Calu3 (cell line): ENCODE measurements at regions of chr11 and their contacts with region 1.

Region 1: GRCh38 chr11:111422494-111423249 is 43.6 kb upstream of the POU2AF1 start:
- DNase-seq: peak; percentile 72
- H3K4me3 Mint-ChIP-seq: no peak overlapping the region
- H3K27ac Mint-ChIP-seq: no peak overlapping the region
- H3K4me1 Mint-ChIP-seq: peaks cover 23% of the 10 kb centered on the region
- H3K27me3 Mint-ChIP-seq: peaks cover 13% of the 10 kb centered on the region
- CTCF ChIP-seq: peak; percentile 75

Region 2: DNA sequence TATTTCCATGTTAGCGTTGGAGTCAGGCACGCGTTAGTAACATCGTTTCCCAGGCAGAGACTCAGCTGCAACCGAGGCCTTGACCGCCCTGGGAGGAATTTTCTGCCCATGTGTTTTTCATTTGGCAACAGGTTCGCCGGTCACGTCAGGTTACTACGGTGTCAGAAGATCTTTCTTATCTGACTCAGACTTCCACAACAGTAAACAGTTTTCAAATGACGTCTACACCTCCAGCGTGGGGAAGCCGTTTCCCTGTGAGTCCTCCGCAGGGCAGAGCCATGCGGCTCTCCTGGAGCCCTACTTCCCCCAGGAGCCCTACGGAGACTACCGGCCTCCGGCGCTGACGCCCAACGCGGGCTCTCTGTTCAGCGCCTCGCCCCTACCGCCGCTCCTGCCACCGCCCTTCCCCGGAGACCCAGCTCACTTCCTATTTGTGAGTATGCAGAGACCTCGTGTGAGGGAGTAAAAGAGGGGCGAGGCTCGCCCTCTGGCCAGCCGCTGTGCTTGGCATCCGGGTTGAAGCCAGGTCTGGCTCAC is 138.7 kb before region 1 on chr11:
- CTCF ChIA-PET with region 1: interaction called, 8 read pairs
- intact Hi-C with region 1: loop called (anchors 1 kb)
- DNase-seq: peak; percentile 43
- H3K4me3 Mint-ChIP-seq: peak overlapping the region; percentile 61
- H3K27ac Mint-ChIP-seq: no peak overlapping the region
- H3K4me1 Mint-ChIP-seq: peaks cover 13% of the 10 kb centered on the region
- H3K27me3 Mint-ChIP-seq: peaks cover 30% of the 10 kb centered on the region
- CTCF ChIP-seq: no peak

Region 3: DNA sequence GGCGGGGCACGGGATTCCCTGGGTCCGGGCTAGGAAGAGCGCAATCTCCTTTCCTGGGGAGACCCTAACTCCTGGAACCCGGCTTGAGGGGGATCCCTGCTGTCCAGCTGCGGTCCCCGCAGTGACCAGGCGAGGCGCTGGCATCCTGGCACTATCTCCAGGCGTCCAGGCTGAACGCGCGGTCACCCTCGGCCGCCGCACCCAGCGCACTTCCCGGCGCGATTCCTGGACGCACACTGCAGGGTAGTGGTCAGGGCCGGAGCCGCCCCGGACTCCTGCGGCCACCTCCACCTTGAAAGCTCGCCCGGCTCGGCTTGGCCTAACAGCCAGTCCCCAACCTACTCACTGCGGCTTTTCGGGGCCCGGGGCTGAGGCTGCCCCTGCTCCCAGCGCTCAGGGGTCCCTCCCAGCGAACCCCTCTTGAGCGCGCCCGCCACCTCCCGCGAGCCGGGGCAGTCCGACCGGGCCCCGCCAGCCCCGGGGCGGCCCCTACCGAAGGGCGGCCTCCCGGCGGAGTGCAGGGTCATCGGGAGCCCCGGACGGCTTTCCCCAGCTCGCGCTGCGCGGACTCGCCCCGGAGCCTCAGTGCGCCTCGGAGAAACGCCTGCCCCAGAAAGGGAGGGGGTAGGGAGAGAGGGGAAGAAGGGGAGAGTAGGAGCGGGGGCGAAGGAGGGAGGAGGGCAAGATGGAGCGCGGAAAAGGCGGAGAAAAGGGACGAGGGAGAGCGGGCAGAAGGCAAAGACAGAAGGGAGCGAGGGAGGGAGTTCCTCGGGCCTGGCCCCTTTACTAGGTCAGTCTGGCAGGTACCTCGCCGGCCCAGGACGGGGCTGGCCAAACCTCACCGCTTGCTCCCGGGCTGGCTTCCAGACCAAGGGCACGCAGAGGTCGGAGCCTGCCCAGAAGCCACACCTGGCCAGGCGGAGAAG is 123.3 kb before region 1 on chr11:
- CTCF ChIA-PET with region 1: interaction called, 7 read pairs
- intact Hi-C with region 1: loop called (anchors 5 kb)
- DNase-seq: peak; percentile 76
- H3K4me3 Mint-ChIP-seq: peak overlapping the region; percentile 66
- H3K27ac Mint-ChIP-seq: no peak overlapping the region
- H3K4me1 Mint-ChIP-seq: peaks cover 9% of the 10 kb centered on the region
- H3K27me3 Mint-ChIP-seq: no peaks in the 10 kb centered on the region
- CTCF ChIP-seq: peak; percentile 54

Region 4: DNA sequence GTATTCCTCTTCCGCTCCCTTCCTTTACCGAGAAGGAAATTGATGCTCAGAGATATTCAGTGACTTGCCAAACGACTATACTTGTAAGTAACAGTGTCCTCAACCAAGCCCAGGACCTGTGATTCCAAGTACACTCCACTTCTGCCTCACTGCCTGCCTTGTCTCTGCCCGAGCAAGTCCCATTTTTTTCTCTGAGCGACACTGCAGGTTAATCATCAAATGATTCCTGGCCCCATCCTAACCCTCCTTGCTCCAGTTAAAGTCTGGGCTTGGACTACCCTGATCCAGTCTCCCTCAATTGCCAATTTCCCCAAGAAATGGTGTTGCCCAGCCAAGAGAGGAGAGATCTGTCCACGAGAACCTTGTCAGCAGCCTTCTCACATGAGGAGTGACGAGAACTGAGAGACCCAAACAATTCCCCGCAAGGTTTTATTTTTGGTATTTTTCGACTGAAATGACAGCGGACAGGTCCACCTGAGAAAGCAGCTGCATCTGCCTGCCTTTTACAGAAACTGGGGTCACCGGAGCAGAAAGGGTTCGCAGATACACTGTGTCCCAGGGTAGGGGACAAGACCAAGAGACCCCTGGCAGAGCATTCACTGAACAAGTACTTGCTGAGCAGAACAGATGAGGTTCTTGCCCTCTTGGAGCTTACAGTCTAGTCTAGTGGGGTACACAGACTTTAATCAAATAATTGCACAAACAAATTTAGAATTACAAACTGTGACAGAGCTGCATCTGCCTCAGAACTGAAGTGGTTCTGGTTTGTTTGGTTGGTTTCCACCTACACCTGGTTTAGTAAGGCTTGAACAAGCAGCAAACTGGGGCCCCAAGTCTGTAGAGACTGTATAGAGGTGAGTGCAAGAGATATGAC is 55.0 kb before region 1 on chr11:
- CTCF ChIA-PET with region 1: no interaction called
- intact Hi-C with region 1: loop called (anchors 10 kb)
- DNase-seq: no peak
- H3K4me3 Mint-ChIP-seq: no peak overlapping the region
- H3K27ac Mint-ChIP-seq: no peak overlapping the region
- H3K4me1 Mint-ChIP-seq: peaks cover 1% of the 10 kb centered on the region
- H3K27me3 Mint-ChIP-seq: no peaks in the 10 kb centered on the region
- CTCF ChIP-seq: no peak

Region 5: DNA sequence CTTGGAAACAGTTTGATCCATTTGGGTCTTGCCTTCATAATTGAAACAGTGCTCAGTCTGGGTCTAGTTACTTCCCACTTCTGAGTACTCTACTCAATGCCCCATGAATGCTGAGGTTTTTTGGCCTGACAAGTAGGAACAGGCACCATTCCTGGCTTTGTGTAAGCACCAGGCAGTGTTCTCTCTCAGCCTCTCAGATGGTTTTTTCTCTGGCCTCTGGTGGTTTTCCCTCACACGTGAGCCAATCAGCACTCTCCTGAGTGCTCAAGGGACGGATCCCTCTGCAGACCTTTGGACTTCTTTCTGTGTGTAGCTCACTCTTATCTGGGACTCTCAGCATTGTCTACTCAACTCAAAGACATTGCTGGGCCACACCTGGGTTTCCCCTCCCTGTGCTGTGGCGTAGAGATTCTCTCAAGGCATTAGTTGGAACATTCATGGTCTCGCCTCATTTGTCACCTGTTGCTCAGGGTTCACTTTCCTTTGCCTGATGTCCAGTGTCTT is 200.9 kb after region 1 on chr11:
- CTCF ChIA-PET with region 1: no interaction called
- intact Hi-C with region 1: no loop called
- DNase-seq: no peak
- H3K4me3 Mint-ChIP-seq: no peak overlapping the region
- H3K27ac Mint-ChIP-seq: no peak overlapping the region
- H3K4me1 Mint-ChIP-seq: peaks cover 24% of the 10 kb centered on the region
- H3K27me3 Mint-ChIP-seq: no peaks in the 10 kb centered on the region
- CTCF ChIP-seq: no peak